PC-9 (cell line): ENCODE measurements at regions of chr5 and their contacts with region 1.

Region 1: DNA sequence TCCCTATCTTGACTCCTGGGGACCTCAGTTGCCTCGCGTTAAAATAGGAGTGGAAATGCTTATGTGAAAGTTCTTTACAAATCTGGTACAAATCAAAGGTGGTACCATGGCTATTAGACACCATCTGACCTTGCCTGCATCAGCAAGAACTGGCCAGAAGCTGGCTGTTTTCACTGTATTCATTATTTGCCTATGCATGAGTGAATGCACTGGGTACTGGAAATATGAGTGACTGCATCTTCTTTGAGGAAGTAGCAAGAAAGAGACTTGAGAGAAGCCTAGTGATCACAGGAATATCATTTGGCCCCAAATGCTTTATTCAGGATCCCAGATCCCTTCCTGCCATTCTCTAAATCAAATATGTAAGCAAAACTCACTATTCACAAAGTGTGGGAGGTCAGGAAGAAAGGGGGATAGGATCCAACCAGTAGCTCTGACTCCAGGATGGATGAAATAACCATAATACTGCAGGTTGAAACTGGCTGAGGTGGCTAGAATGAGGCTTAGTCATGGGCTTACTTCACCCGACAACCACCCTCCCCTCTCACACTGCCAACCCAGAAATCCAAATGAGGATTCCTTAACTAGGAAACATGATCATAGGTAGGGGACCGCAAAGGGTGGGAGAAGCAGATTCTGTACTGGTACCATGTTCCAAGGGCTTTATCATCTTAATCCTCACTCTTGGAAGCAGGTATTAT is 56.7 kb downstream of the FAM114A2 start:
- DNase-seq: no peak
- H3K4me3 ChIP-seq: no peak overlapping the region
- H3K27ac ChIP-seq: no peak overlapping the region
- H3K4me1 ChIP-seq: peaks cover 4% of the 10 kb centered on the region; the same call in 1 of the 2 replicates
- H3K27me3 ChIP-seq: no peaks in the 10 kb centered on the region
- CTCF ChIP-seq: no peak

Region 2: DNA sequence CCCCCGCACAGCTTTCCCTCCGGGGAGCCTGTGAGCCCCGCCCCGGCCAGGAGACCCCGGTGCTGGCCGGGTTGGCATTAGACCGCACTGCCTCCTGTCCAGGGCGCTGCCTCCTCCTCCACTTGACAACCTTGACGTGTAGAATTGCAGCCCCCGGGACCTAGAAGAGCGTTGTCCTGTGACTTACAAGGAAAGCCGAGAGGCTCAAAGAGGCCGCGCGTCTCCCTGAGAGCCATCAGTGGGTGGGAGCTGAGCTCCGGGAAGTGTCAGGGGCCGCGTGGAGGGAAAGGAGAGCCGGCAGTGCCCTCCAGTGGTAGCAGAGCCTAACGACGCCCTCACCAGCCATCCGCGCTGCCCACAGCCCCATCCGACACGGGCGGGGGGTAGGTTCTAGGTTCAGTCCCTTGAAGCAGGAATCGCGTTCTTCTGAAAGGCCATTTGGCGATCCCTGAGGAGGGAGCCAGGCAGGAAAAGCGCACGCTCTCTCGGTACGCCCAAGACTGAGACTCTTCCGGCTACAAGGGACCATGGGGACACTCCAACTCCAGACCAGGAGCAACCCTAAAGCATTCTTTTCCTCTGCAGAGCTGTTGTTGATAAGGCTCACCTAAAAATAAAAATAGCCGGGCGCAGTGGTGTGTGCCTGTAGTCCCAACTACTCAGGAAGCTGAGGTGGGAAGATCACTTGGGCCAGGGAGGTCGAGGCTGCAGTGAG is 423.2 kb after region 1 on chr5:
- CTCF ChIA-PET with region 1: no interaction called
- POLR2A ChIA-PET with region 1: no interaction called
- intact Hi-C with region 1: loop called (anchors 5 kb)
- DNase-seq: peak in 1 of 2 experiments; percentile 23
- H3K4me3 ChIP-seq: no peak overlapping the region
- H3K27ac ChIP-seq: no peak overlapping the region
- H3K4me1 ChIP-seq: no peaks in the 10 kb centered on the region
- H3K27me3 ChIP-seq: no peaks in the 10 kb centered on the region
- CTCF ChIP-seq: peak; percentile 61